B cell (primary cell): ENCODE measurements at regions of chr22 and their contacts with region 1.

Region 1: DNA sequence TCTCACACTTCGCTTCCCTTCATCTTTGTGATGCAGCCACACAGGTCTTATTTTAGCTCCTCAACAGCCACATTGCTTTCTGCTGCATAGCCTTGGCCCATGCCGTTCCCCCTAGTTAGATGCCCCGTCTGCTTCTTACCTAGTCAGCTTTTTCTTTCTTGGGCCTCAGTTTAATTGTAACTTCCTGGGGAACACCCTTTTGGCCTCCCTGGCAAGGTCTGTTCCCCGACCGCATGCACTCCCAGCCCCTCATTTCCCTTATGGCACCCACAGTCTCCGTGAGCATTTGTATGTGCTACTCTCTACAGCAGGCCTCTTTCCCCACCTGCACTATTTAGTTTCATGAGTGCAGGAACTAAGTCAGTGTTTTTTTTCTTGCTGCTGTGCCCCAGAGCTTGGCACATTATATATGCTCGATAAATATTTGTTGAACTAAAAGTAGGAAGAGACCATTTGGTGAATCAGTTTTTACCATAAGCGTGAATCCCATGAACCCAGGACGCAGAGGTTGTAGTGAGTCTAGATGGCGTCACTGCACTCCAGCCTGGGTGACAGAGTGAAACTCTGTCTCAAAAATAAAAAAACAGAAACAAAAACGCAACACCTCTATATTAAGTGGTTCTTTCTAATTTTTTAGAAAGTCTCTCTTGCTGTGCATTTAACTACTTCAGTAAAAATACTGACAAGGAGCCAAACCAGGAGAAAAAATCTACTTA is 38.5 kb downstream of the TNRC6B start:
- DNase-seq: peak; percentile 44
- ATAC-seq: peak; percentile 59
- H3K4me3 ChIP-seq: peak overlapping the region in 2 of 5 experiments; percentile 6 to 35
- H3K4me3 Mint-ChIP-seq: peak overlapping the region; percentile 72
- H3K27ac ChIP-seq: peak overlapping the region; percentile 39 to 73
- H3K27ac Mint-ChIP-seq: peak overlapping the region; percentile 84
- H3K4me1 ChIP-seq: peaks cover 49 to 54% of the 10 kb centered on the region in 2 donors
- H3K4me1 Mint-ChIP-seq: peaks cover 77% of the 10 kb centered on the region
- H3K27me3 ChIP-seq: no peaks in the 10 kb centered on the region
- H3K27me3 Mint-ChIP-seq: no peaks in the 10 kb centered on the region
- CTCF ChIP-seq: no peak

Region 2: DNA sequence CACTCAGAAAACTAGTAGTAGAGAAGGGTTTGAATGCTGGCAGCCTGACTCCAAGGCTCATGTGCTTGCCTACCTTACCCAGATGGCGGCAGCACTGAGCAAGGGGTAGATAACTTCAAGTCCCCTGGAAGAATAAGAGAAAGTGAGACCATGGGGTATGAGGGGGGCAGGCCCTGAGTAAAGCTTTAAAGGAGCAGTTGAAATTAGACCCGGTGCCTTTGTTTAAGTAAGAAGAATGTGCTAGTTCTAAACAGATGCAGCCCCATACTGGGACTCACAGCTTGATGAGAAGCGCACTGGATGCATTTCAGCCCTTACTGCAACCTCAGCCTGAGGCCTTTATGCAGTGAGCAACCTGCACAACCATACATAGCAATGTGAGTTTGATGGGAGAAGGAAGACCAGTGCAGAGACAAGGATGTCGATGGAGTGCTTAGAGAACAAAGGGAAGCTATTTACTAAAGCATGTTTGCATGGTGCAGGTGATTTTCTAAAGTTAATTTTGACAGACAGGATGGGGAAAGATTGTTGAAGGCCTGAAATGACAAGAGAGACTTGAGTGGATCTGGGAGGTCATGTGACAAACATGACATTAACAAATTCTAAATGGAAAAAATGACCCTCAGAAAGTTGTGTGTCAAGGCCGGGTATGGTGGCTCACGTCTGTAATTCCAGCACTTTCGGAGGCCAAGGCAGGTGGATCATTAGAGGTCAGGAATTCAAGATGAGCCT is 283.1 kb before region 1 on chr22:
- CTCF ChIA-PET with region 1: no interaction called
- POLR2A ChIA-PET with region 1: no interaction called
- intact Hi-C with region 1: no loop called
- DNase-seq: peak; percentile 43
- ATAC-seq: no peak
- H3K4me3 ChIP-seq: no peak overlapping the region
- H3K4me3 Mint-ChIP-seq: peak overlapping the region; percentile 67
- H3K27ac ChIP-seq: peak overlapping the region in 1 of 2 donors; percentile 69
- H3K27ac Mint-ChIP-seq: peak overlapping the region; percentile 83
- H3K4me1 ChIP-seq: peaks cover 68 to 77% of the 10 kb centered on the region in 2 donors
- H3K4me1 Mint-ChIP-seq: peaks cover 56% of the 10 kb centered on the region
- H3K27me3 ChIP-seq: no peaks in the 10 kb centered on the region
- H3K27me3 Mint-ChIP-seq: no peaks in the 10 kb centered on the region
- CTCF ChIP-seq: peak; percentile 55

Region 3: DNA sequence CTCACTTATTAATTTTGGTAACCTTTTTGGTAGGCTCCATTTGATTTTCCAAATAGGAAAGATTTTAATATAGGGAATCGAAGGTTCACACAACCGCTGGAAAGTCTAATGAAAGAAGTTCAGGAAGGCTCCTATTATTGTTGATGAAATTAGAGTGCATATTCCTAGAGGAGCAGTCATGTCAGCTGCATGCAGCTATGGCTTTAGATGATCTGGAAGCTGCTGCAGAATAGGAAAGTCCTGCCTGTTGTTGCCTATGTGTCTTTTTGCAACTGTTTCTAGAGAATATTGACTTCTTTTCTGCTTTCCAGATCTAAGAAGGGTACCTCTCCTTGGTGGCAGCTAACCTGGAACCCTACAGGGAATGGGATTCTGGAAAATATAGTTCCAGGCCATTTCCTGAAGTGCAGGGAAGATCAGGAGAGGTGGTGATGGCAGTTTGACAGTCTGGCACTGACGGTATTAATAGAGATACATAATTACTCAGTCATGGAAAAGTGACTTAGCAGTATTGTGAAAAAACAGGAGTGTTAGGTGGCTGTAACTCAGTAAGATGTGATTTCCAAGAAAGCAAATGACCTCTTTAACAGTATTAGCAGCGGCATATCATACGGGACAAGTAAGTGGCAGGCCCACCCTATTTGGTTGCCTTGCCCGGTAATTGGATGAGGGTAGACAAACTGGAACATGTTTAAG is 15.6 kb after region 1 on chr22:
- CTCF ChIA-PET with region 1: no interaction called
- POLR2A ChIA-PET with region 1: no interaction called
- intact Hi-C with region 1: no loop called
- DNase-seq: no peak
- ATAC-seq: no peak
- H3K4me3 ChIP-seq: no peak overlapping the region
- H3K4me3 Mint-ChIP-seq: no peak overlapping the region
- H3K27ac ChIP-seq: no peak overlapping the region
- H3K27ac Mint-ChIP-seq: no peak overlapping the region
- H3K4me1 ChIP-seq: peaks cover 0 to 7% of the 10 kb centered on the region in 2 donors
- H3K4me1 Mint-ChIP-seq: peaks cover 24% of the 10 kb centered on the region
- H3K27me3 ChIP-seq: no peaks in the 10 kb centered on the region
- H3K27me3 Mint-ChIP-seq: no peaks in the 10 kb centered on the region
- CTCF ChIP-seq: no peak

Region 4: GRCh38 chr22:40243891-40244290 is 27.7 kb after region 1 on chr22:
- CTCF ChIA-PET with region 1: no interaction called
- POLR2A ChIA-PET with region 1: no interaction called
- intact Hi-C with region 1: loop called (anchors 2 kb)
- DNase-seq: peak; percentile 21
- ATAC-seq: no peak
- H3K4me3 ChIP-seq: no peak overlapping the region
- H3K4me3 Mint-ChIP-seq: peak overlapping the region; percentile 18
- H3K27ac ChIP-seq: peak overlapping the region in 1 of 2 donors; percentile 50
- H3K27ac Mint-ChIP-seq: no peak overlapping the region
- H3K4me1 ChIP-seq: peaks cover 20 to 23% of the 10 kb centered on the region in 2 donors
- H3K4me1 Mint-ChIP-seq: peaks cover 45% of the 10 kb centered on the region
- H3K27me3 ChIP-seq: no peaks in the 10 kb centered on the region
- H3K27me3 Mint-ChIP-seq: no peaks in the 10 kb centered on the region
- CTCF ChIP-seq: no peak